Left ventricle myocardium superior (tissue), 1 donor: ENCODE measurements at regions of chr10 and their contacts with region 1.

Region 1: GRCh38 chr10:72009411-72010081 is 45.4 kb downstream of the CHST3 start:
- DNase-seq: peak; percentile 89
- ATAC-seq: peak; percentile 82

Region 2: GRCh38 chr10:71963756-71964668 is 45.5 kb before region 1 on chr10 and contains the start of gene CHST3:
- intact Hi-C with region 1: loop called (anchors 10 kb)
- DNase-seq: peak; percentile 91
- ATAC-seq: peak; percentile 86
- total RNA-seq, gene CHST3: 18.5 TPM

Region 3: GRCh38 chr10:72146071-72146470 is 136.5 kb after region 1 on chr10:
- intact Hi-C with region 1: no loop called
- DNase-seq: no peak
- ATAC-seq: no peak

Region 4: DNA sequence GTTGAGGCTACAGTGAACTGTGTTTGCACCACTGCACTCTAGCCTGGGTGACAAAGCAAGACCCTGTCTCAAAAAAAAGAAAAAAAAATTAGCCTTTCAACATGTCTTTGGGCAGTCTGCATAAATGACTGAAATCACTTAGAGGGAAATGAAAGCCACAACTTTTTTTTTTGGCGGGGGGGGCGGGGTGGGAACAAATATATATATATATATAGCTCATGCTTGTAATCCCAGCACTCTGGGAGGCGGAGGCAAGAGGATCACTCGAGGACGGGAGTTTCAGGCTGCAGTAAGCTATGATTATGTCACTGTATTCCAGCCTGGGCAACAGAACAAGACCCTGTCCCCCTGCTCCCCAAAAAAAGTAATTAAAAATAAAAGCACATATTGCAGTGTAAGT is 639.7 kb after region 1 on chr10:
- intact Hi-C with region 1: no loop called
- DNase-seq: no peak
- ATAC-seq: no peak